HepG2 (cell line): ENCODE measurements at regions of chr3 and their contacts with region 1.

Region 1: GRCh38 chr3:103991461-103992115 is 1375.1 kb upstream of the ALCAM start:
- DNase-seq: no peak
- ATAC-seq: peak; percentile 69
- H3K4me3 ChIP-seq: no peak overlapping the region
- H3K27ac ChIP-seq: no peak overlapping the region
- H3K4me1 ChIP-seq: 0 out of 2 replicates have a peak, but pooled peaks cover 9% of the 10 kb centered on the region
- H3K27me3 ChIP-seq: 0 out of 5 replicates have a peak, but pooled peaks cover 0 to 4% of the 10 kb centered on the region in 2 experiments
- CTCF ChIP-seq: peak; percentile 50
- EP300 ChIP-seq: no peak
- POLR2A ChIP-seq: no peak
- RAD21 ChIP-seq: no peak

Region 2: DNA sequence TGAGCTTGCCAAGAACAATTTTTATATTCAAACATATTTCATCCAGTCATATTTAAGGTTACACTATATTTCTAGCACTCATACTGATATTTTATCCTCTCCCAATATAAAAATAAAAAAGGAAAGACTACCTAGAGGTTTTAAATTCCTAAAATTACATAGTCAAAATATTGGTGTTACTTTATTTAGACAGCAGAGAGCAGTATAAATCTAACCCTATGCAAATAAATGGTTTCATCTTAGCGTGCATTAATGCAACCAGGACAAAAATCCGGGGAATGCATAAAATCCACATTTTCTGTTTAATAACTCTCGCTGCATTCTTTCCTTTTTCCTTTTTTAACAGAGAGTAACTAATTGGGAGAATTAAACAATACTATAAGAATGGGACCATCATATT is 72.3 kb before region 1 on chr3:
- CTCF ChIA-PET with region 1: no interaction called
- POLR2A ChIA-PET with region 1: no interaction called
- in situ Hi-C with region 1: no loop called
- intact Hi-C with region 1: loop called (anchors 5 kb)
- DNase-seq: no peak
- ATAC-seq: no peak
- H3K4me3 ChIP-seq: no peak overlapping the region
- H3K27ac ChIP-seq: no peak overlapping the region
- H3K4me1 ChIP-seq: no peaks in the 10 kb centered on the region
- H3K27me3 ChIP-seq: no peaks in the 10 kb centered on the region
- CTCF ChIP-seq: no peak
- EP300 ChIP-seq: no peak
- POLR2A ChIP-seq: no peak
- RAD21 ChIP-seq: no peak